GM18951 (cell line): ENCODE measurements at regions of chr4 and their contacts with region 1.

Region 1: GRCh38 chr4:24488399-24489164 is 95.8 kb downstream of the DHX15 start:
- POLR2A ChIP-seq: no peak

Region 2: DNA sequence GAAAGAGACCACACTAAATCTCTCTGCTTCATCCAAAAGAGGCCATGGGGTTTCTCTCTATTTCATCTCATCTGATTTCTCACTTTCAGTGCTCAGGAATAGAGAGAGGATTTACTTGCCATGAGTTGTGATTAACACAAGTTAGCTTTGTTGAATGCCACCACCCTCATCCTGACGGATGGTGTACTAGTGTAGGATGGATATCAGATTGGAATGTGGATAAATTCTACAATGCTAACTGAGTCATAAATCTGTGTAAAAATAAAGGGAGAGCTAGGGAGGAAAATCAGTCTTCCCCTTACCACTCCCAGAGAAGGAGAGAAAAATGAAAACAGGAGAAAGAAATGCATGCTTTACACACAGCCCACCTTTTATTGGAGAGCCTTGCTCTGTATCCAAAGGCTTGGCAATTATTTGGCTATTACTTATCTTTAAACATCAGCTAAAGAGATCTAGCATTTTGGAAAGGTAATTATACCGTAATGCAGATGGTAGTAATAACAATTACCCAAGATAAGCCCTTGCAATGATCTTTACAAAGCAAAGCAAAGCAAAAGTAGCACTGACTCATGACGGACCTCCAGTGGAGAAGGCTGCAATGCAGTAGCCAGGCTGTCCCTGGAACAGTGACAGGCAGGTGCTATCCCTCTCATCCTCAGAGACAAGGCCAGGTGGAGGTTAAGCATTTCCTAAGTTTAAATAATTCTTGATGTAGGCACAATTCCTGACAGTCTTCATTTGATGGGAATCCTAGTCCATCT is 292.4 kb before region 1 on chr4:
- in situ Hi-C with region 1: no loop called
- POLR2A ChIP-seq: no peak

Region 3: DNA sequence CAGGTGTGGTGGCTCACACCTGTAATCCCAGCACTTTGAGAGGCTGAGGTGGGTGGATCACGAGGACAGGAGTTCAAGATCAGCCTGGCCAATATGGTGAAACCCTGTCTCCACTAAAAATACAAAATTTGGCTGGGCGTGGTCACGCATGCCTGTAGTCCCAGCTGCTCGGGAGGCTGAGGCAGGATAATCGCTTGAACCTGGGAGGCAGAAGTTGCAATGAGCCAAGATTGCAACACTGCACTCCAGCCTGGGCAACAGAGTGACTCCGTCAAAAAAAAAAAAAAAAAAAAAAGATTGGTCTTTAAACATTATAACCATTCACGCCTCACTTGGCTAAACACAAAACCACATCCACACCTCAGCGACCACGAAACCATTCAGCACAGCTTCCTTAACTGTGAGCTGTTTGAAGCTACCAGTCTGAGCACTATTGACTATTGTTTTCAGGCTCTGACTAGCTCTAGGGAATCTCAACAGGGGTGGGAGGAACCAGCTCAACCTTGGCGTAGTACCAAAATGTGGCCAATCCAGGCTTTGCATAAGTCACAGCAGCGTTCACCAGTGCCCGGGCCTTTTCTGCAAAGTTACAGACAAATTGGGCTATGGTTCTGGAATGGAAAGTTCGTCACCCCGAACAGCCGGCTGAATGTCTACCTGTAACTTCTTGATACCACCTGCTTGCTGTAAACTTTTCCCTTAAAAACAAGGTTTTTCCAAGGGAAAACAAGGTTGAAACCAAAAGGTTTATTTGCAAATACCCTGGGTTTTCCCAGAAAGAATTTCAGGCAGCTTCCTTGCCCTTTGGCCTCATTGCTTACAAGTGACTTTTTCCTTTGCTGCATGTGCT is 169.4 kb after region 1 on chr4:
- in situ Hi-C with region 1: no loop called
- POLR2A ChIP-seq: no peak

Region 4: DNA sequence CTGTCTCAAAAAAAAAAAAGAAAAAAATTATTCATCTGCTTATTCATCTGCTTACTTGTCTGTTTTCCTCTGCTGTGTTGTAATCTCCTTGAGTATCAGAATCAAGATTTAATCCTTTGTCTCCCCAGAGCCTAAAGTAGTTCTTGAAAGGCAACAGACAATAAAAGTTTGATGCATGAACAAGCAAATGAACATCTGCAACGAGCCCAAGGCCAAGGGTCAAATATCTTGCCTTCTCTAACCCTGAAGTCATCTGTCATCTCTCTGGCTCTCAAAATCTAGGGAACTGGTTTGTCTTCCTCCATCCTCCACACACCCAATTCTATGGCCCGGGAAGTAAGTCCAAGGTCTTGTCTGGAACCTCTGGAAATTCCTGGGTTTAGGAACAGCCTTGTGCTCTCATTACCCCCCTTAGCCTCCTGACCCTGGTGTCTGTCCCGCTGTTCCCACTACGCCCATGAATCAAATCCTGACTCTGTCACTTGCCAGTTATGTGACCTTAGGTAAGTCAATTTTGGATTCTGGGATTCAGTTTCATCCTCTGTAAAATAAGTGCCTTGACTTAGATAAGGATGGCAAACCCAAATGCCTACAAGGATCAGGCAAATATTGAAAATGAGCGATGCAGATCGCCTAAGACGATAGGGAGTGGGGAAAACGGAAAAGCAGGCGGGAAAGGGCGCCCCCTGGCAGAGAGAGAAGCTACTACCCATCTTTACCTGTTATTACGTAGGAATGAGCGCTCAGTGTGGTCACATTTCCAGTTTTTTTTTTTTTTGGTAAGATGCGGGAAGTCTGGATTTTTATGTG is 198.5 kb after region 1 on chr4:
- in situ Hi-C with region 1: loop called (anchors 25 kb)
- POLR2A ChIP-seq: no peak

Region 5: GRCh38 chr4:24736066-24736465 is 247.5 kb after region 1 on chr4:
- in situ Hi-C with region 1: no loop called
- POLR2A ChIP-seq: no peak